HEK293 (cell line): ENCODE measurements at regions of chr15 and their contacts with region 1.

Region 1: DNA sequence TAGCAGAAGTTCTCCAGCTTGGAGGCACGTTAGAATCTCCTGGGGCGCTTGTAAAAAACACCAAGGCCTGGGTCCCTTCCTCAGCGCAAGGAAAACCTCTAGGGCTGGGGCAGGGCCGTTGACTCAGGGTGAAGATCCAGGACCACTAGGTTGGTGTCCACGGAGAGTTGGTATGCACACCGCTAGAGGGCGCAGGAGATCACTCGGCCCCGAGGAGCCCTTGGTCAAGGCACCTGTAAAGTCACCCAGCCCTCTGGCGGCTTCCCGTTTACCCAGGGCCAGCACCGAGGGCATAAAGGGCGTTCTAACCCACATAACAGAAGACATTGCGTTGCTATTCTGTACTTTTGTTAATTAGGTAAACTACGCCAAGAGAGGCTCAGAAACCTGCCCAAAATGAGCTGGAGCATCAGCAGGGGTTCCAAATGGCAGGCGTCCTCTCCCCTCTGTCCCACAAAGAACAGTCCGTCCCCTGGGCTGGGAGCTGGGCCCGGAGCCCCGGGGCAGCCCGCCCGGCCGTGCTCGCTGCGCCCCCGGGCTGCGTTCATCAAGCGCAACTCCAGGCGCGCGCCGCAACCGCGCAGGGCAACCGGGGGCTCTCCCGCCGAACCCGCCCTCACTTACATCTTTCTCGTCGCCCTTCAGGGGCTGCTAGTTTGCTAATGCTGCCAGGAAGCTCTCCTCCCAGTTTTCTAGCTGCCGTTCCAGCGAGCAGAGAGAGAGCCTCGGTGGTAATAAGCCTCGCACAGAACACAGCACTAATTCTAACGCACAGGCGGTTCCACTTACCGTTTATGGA is 332.1 kb downstream of the ARRDC4 start:
- H3K4me3 ChIP-seq: peak overlapping the region; percentile 19
- H3K27ac ChIP-seq: no peak overlapping the region; the same call in 1 of the 2 replicates
- H3K4me1 ChIP-seq: peaks cover 11% of the 10 kb centered on the region
- CTCF ChIP-seq: peak; percentile 71

Region 2: DNA sequence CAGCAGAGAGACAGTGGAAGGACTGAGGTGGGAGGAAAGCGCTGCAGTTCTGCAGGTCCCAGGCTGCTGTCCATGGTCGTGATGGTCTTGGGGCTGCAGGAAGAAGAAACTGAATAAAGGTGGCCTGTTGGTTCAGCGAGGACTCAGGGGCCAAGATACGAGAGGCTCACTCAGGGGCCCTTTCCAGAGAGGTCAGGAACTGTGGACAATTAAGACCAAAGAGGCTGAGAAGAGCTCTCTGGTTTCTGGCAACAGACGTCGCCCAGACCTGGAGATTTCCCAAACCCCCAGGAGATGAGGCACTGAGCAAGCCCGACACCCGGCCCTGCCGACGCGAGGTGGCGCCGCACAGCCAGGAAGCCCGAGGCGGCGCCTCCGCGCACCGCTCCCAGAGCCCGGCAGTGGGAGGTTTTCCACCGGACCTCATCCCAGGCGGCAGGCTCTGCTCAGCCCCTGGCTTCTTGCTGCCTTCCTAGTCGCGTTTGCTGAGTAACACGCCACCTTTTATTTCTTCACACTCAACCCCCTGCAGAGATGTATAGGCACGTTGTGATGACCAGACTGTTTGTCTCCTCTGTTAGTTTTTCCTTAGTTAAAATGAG is 388.6 kb before region 1 on chr15:
- CTCF ChIA-PET with region 1: interaction called, 10 read pairs
- POLR2A ChIA-PET with region 1: no interaction called
- H3K4me3 ChIP-seq: no peak overlapping the region
- H3K27ac ChIP-seq: no peak overlapping the region
- H3K4me1 ChIP-seq: no peaks in the 10 kb centered on the region
- CTCF ChIP-seq: peak; percentile 88

Region 3: GRCh38 chr15:98281130-98281529 is 11.5 kb before region 1 on chr15:
- CTCF ChIA-PET with region 1: interaction called, 11 read pairs
- POLR2A ChIA-PET with region 1: no interaction called
- H3K4me3 ChIP-seq: no peak overlapping the region
- H3K27ac ChIP-seq: no peak overlapping the region
- H3K4me1 ChIP-seq: no peaks in the 10 kb centered on the region; the same call in 1 of the 2 replicates
- CTCF ChIP-seq: no peak

Region 4: DNA sequence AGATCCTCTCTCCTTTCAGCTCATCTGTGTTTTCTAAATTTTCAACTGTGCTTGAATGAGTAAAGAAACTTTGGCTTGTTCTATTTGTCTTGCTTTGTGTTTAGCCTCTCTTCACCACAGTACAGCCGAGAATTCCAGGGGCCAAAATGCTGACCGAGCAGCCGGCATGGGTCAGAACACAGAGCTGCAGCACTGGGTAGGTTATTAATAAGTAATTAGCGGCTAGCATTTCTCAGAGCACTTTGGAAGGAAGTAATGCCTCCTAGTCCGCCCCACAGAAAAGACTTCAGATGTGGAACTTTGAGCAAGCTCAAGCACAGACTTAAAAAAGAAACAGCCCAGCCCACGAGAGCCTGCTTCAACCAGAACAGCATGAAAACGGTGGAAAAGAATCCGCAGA is 11.7 kb after region 1 on chr15:
- CTCF ChIA-PET with region 1: interaction called, 14 read pairs
- POLR2A ChIA-PET with region 1: no interaction called
- H3K4me3 ChIP-seq: no peak overlapping the region
- H3K27ac ChIP-seq: no peak overlapping the region
- H3K4me1 ChIP-seq: no peaks in the 10 kb centered on the region
- CTCF ChIP-seq: no peak

Region 5: DNA sequence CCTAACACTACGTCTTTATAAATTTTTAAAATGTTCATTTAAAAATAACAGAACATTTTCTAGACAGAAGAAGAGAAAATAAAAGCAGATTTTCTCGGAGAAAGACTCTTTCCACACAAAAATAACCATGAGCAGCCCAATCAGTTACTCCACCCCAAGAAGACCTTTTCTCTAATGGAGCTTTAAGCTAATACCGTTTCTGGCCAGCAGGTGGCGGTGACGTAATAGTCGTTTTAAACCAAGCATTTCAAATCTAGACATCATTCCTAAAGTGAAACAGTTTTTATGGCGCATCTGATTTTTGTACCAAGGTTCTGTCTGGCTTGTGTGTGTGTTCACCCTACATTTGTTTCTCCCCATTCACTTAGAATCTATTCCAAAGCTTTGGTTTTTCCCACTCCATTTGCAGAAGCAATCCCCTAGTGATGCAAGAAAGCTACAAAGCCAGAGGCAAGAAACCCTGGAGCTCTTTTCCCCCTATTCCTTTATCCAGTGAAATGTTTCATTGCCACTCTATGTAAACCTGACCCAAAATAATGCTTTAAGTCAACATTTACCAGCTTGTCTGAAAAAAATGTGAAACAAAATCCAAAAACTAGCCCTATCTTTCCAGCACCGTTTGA is 19.0 kb after region 1 on chr15:
- CTCF ChIA-PET with region 1: interaction called, 11 read pairs
- POLR2A ChIA-PET with region 1: no interaction called
- H3K4me3 ChIP-seq: no peak overlapping the region
- H3K27ac ChIP-seq: no peak overlapping the region
- H3K4me1 ChIP-seq: no peaks in the 10 kb centered on the region
- CTCF ChIP-seq: no peak

Region 6: DNA sequence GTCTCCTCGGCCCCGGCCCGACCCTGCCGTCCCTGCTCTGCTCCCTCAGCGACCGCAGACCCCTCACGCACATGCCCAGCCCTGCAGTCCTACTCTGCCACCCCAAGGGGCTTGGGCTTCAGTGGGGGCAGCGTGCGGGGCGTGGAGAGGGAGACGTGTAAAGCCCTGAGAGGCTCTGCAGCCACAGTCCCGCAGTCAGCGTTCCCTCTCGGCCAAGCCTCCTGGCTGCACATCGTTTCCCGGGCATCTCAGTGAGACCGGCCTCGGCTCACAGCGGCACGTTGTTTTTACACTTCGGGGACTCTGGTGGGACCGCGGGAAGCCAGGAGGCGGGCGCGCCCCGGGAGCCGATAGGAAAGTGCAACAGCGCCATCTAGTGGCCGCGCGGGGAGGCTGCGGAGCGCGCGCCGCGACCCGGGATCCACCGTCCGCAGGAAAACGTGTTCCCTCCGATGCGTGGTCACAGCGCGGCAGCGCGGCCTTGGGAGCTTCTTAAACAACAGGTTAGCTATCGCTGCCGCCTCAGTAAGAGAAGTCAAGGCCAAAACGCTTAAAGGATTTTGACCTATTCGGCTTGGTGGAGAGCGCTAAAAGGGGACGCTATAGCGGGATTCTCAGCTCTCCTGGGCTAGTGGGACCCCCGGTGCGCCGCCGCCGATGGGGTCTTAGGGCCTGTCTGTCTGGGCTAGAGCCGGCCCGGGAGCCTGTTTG is 128.9 kb after region 1 on chr15:
- CTCF ChIA-PET with region 1: interaction called, 11 read pairs
- POLR2A ChIA-PET with region 1: no interaction called
- H3K4me3 ChIP-seq: peak overlapping the region; percentile 18
- H3K27ac ChIP-seq: no peak overlapping the region
- H3K4me1 ChIP-seq: 0 out of 2 replicates have a peak, but pooled peaks cover 2% of the 10 kb centered on the region
- CTCF ChIP-seq: peak; percentile 95